A549 (cell line): ENCODE measurements at regions of chr15 and their contacts with region 1.

Region 1: DNA sequence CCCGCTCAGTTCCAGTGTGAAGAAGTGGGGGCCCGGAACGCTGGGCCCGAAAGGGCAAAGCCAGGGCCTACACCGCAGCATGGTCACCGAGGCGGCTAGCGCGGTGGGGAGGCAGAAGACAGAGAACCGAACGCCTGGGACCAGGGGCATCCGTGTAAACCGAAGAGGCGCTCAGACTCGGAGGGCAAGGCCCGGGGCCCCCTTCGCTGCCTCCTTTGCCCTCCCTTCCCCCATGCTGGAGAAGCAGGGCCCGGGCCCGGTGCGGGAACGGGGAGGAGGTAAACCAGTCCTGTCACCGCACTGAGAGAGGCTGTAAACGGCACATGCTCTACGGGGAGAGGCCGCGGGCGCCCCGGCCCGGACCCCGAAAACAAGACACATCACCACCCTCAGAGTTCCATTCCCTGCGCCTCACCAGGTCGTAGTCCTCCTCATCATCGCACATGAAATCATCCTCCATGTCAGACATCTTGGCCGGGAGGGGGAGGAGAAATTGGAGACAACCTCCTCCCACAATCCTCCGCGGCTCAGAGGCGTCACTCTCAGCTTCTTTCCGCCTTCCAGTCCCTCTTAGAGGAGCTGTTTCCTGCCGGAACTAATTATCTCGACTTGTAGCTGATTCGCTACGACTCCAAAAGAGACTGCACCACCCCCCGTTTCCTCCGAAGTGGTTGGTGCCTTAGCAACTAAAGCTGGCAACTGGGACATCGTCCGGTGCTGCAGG is at the start of gene COPS2:
- DNase-seq: peak; percentile 71 to 96
- ATAC-seq: peak; percentile 97 to 99
- H3K4me3 ChIP-seq: peak within 1 kb of the TSS; percentile 99
- H3K27ac ChIP-seq: peak within 1 kb of the TSS; percentile 97 to 98
- H3K4me1 ChIP-seq: peaks cover 18% of the 10 kb centered on the region; the same call in 1 of the 3 replicates
- CTCF ChIP-seq: no peak
- EP300 ChIP-seq: no peak
- POLR2A ChIP-seq: peak; percentile 42
- RAD21 ChIP-seq: no peak
- polyA plus RNA-seq, gene COPS2: 49.9 and 66.6 TPM in 2 replicates

Region 2: DNA sequence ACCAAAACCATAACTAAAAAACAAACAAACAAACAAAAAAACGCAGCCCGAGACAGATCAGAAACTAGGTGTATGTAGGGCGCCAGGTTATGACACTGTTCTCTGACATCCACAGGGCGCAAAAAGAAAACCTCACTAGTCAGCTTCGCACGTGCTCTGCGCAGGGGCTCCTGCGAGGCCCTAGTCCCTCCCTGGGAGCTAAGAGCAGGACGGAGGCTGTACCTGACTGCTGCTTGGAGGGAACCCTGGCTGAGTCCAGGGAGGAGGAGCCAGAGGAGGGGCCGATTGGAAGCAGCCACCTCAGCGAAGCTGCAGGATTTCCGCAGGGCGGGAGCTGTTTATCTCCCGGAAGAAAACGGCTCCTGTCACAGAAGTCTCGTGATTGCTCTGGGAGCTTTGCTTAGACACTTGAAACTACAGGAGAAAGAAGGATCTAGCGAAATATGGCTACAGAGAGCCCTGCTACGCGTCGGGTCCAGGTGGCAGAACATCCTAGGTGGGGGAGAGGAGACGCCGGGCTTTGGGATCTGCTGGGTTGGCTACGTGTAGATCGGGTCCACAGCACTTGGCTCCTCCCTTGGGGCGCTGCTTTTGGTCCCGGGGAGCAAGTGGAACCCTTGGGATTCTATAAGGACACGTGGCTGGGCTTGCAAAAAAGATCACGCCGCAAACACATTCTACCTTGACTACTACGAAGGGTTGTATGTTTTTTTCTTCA is 14.8 kb after region 1 on chr15 and contains the start of gene GALK2:
- CTCF ChIA-PET with region 1: no interaction called
- POLR2A ChIA-PET with region 1: interaction called, 15 read pairs
- DNase-seq: peak; percentile 64 to 88
- ATAC-seq: peak; percentile 99 to 100
- H3K4me3 ChIP-seq: peak within 1 kb of the TSS; percentile 67
- H3K27ac ChIP-seq: peak within 1 kb of the TSS; percentile 81 to 86
- H3K4me1 ChIP-seq: peaks cover 23% of the 10 kb centered on the region
- CTCF ChIP-seq: no peak
- EP300 ChIP-seq: no peak
- POLR2A ChIP-seq: peak; percentile 45
- RAD21 ChIP-seq: no peak
- polyA plus RNA-seq, gene GALK2: 40.5 and 44.7 TPM in 2 replicates